Posterior vena cava (tissue), 2 donors: ENCODE measurements at regions of chr14 and their contacts with region 1.

Region 1: DNA sequence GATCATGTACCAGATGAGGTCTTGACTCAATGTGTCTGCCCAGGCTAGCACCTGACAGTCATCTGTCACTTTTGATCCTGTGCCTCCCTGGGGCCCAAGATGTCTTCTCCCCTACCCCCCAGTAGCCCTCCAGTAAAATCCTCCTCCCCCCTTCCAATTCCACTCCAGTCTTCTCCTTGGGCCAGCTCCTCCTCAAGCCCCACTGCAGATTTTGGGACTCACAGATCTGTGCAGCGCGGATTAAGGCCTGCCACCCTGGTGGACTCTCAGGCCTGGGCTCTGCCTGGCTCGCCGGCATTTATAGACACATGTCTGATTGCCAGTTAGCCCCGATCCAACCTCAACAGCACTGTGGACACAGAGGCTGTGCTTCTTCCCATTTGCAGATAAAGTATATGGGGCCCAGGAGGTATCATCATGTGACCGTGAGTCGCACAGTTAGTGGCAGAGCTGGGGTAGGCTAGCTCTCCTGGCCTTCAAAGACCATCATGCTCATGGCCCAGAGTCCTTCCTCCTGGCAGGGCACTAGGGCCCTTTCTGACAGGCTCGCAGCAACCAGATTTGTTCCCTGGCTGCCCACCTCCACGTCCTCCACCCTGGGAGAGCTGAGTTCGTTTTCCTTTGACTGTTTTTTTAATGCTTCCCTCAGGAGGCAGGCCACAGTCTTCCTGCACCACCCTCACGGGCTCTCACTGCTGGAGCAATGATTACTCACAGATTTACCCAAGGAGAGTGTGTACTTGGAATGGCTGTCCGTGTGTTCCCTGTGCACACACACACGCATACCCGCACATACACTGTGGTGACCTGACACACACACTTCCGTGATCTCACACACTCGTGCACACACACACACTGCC is 98.3 kb upstream of the DIO3 start:
- DNase-seq: peak; percentile 66

Region 2: DNA sequence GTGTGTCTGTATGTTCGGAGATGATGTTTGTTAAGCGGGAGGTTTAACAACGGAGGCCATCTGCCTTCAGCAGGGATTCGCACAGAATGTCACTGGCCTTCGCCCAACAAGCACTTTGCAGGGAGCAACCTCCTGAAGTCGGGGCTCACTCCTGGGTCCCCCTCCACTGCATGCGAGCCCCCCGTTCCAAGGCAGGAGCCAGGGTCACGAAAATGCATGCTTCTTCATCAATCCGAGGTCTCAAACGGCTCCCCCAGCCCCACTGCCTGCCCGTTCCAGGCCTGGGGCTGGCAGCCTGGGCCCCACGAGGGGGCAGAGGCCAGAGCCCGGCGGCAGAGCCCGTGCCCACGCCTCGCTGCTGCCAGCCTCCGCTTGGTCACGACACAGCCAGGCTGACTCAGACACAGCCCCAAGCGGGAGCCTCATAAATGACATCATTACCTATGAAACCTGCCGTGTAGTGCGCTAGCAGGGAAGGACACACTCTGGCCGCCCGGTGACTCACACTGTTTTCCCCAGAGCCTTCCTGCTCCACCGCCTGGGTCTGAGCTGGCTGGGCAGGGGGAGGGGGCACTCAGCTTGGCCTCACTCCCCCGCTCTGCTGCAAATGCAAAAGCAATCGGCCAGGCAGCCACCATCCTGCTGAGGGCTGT is 389.9 kb before region 1 on chr14:
- intact Hi-C with region 1: loop called in 1 of 2 experiments (anchors 5 kb)
- DNase-seq: peak; percentile 80